Endothelial cell of umbilical vein (primary cell): ENCODE measurements at regions of chr10 and their contacts with region 1.

Region 1: GRCh38 chr10:127906548-127907377 is at the start of gene PTPRE:
- DNase-seq: peak; percentile 69
- H3K4me3 ChIP-seq: peak within 1 kb of the TSS; percentile 32 to 78 (median 61)
- H3K27ac ChIP-seq: peak within 1 kb of the TSS; percentile 67
- H3K4me1 ChIP-seq: peaks cover 20% of the 10 kb centered on the region
- H3K27me3 ChIP-seq: no peaks in the 10 kb centered on the region
- CTCF ChIP-seq: peak; percentile 72 to 92
- POLR2A ChIP-seq: peak; percentile 24
- total RNA-seq, gene PTPRE: 114 and 116 TPM in 2 replicates

Region 2: GRCh38 chr10:127919418-127920271 is 12.9 kb after region 1 on chr10:
- CTCF ChIA-PET with region 1: interaction called, 63 read pairs
- POLR2A ChIA-PET with region 1: no interaction called
- dilution Hi-C with region 1: no loop called
- intact Hi-C with region 1: loop called (anchors 1 kb)
- DNase-seq: peak; percentile 83
- H3K4me3 ChIP-seq: no peak overlapping the region
- H3K27ac ChIP-seq: peak overlapping the region; percentile 31
- H3K4me1 ChIP-seq: peaks cover 53% of the 10 kb centered on the region
- H3K27me3 ChIP-seq: no peaks in the 10 kb centered on the region
- CTCF ChIP-seq: peak; percentile 57 to 61
- POLR2A ChIP-seq: no peak

Region 3: DNA sequence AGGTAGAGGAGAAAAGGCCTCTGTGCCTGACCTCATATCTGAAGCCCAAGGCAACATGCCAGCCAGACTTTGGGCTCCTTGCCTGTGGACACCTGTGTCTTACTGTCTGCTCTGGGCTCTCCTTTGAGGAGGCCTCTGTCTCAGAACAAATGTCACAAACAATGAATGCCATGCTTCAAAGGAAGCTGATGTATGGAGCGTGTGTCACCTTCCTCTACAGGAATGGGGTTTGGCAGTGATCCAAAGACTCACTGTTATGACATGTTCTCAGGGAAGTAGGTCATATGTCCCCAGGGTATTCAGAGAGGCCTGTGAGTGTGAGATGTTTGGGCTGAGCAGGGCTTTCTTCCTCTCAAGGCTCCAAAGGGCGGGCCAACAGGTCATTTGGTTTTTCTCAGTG is 38.6 kb after region 1 on chr10:
- CTCF ChIA-PET with region 1: interaction called, 14 read pairs
- POLR2A ChIA-PET with region 1: no interaction called
- dilution Hi-C with region 1: no loop called
- intact Hi-C with region 1: loop called (anchors 1 kb)
- DNase-seq: peak; percentile 94
- H3K4me3 ChIP-seq: no peak overlapping the region
- H3K27ac ChIP-seq: peak overlapping the region; percentile 92
- H3K4me1 ChIP-seq: peaks cover 77% of the 10 kb centered on the region
- H3K27me3 ChIP-seq: no peaks in the 10 kb centered on the region
- CTCF ChIP-seq: no peak
- POLR2A ChIP-seq: peak; percentile 63

Region 4: DNA sequence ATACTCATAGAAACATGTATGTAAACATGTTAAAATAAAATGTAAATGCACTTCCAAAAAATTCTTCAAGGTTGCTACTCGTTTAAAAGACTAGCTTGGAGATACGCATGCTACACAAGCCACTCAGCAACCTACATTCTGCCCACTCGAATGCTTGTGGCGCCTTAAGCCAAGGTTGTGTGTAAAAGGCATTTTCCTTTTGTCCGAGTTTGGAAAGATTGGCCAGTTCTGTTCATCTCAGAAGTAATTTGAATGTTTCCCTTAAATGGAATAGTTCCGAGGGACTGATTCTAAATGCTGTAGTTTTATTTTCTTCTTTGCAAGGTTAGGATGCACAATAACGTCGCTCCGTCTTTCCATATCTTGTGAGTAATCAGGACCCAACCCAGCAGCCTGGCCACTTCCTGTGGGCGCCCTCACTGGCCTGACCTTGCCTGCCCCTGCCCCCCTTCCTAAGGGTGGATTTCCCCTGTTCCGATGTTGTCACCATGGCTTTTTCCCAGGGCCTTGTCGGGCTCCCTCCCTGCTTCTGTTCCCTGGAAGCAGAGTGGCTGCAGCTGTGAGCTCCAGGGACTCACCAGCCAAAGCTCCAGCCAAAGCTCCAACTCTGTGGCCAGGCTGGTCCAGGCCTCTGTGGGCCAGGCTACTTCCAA is 70.7 kb after region 1 on chr10:
- CTCF ChIA-PET with region 1: interaction called, 44 read pairs
- POLR2A ChIA-PET with region 1: no interaction called
- dilution Hi-C with region 1: no loop called
- intact Hi-C with region 1: loop called (anchors 1 kb)
- DNase-seq: peak; percentile 96
- H3K4me3 ChIP-seq: peak overlapping the region in 1 of 3 experiments; percentile 20
- H3K27ac ChIP-seq: peak overlapping the region; percentile 79
- H3K4me1 ChIP-seq: peaks cover 42% of the 10 kb centered on the region
- H3K27me3 ChIP-seq: no peaks in the 10 kb centered on the region
- CTCF ChIP-seq: no peak
- POLR2A ChIP-seq: peak; percentile 54

Region 5: DNA sequence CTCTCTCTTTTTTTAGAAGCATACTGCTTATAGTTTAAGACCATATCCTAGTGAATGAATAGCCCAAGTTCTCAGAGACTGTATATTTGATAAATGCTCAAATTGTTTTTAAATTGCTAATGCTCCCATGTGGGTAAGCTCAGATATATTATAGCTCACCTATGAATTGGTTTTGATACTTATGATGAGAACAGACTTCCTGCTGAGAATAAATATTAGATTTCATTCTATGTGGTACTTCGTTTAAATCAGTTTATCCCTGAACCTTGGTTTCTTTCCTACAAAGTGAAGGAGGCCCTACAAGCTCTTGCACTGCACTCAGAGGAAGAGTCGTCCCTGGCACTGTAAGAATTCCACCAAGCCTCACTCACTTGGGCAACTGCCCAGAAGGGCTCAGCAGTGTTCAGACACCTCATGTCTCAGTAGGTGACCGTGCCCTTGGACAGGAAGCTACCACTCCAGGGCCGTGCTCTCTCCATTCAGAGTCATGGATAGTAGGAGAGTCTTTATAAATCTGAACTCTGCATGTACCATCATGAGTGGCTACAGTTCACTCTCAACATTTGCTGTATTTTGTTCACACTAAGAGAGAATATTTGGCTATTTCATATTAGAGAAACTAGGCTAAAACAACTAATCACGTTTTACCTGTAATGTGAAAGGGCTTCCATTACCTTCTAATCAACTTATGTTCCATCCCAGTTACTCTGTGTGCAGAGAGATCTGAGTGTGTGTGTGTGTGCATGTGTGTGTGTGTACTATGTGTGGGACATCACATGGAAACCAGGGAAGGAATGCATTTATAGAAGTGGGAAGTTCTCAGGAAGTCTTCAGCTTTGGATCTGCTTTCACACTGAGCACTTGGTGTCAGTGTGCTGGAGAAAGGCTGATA is 94.0 kb after region 1 on chr10:
- CTCF ChIA-PET with region 1: interaction called, 20 read pairs
- POLR2A ChIA-PET with region 1: no interaction called
- dilution Hi-C with region 1: no loop called
- intact Hi-C with region 1: no loop called
- DNase-seq: peak; percentile 47
- H3K4me3 ChIP-seq: no peak overlapping the region
- H3K27ac ChIP-seq: no peak overlapping the region
- H3K4me1 ChIP-seq: peaks cover 33% of the 10 kb centered on the region
- H3K27me3 ChIP-seq: no peaks in the 10 kb centered on the region
- CTCF ChIP-seq: no peak
- POLR2A ChIP-seq: no peak

Region 6: DNA sequence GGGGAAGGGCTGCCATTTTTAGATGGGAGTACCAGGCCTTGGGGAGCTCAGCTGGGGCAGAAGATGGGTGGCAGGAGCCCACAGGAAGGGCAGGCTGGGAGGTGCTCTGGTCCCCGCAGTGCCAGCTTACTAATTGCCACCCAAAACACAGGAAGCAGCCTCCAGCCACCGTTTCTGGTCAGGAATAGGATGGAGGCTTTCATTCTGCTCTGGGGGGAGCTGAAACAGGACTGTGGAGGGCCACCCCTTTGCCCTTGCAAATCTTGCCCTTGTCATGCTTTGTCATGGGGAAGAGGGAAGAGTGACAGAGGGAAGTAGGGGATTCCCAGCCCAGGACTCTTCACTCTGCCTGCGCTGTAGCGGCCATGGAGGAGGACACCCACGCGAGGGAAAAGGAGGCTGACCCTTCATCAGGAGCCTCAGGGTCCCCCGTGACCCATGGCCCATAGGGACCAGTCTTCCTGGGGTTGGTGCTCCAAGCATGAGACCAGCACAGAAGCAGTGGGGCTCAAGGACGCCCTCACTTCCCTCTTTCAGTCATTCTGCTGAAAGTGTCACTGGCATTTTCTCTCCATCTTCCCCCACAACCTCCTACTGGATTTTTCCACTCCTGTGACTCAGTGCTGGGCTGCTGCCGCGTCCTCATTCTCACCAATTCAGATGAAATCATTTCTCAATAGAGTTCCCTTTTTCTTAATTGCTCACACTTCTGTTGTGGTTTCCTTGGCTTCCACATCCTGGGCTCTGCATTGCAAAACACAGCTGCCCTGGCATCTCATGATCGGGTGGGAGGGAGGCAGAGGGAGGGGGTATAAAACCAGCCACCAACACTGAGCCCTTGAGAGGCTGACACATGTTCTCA is 157.6 kb after region 1 on chr10:
- CTCF ChIA-PET with region 1: interaction called, 108 read pairs
- POLR2A ChIA-PET with region 1: no interaction called
- dilution Hi-C with region 1: no loop called
- intact Hi-C with region 1: loop called (anchors 1 kb)
- DNase-seq: no peak
- H3K4me3 ChIP-seq: no peak overlapping the region
- H3K27ac ChIP-seq: no peak overlapping the region
- H3K4me1 ChIP-seq: peaks cover 28% of the 10 kb centered on the region
- H3K27me3 ChIP-seq: no peaks in the 10 kb centered on the region
- CTCF ChIP-seq: no peak
- POLR2A ChIP-seq: no peak

Region 7: GRCh38 chr10:128150045-128150493 is 243.3 kb after region 1 on chr10:
- CTCF ChIA-PET with region 1: interaction called, 14 read pairs
- POLR2A ChIA-PET with region 1: no interaction called
- dilution Hi-C with region 1: no loop called
- intact Hi-C with region 1: loop called (anchors 1 kb)
- DNase-seq: peak; percentile 61
- H3K4me3 ChIP-seq: peak overlapping the region in 2 of 3 experiments; percentile 47 to 60
- H3K27ac ChIP-seq: no peak overlapping the region
- H3K4me1 ChIP-seq: no peaks in the 10 kb centered on the region
- H3K27me3 ChIP-seq: peaks cover 6 to 15% of the 10 kb centered on the region in 2 experiments
- CTCF ChIP-seq: peak; percentile 93 to 97
- POLR2A ChIP-seq: no peak